ENCODE measurements at regions of chr7 and their contacts with region 1.

Region 1: GRCh38 chr7:133354546-133355324 is 101.9 kb downstream of the EXOC4 start:
- DNase-seq: no peak
- ATAC-seq: no peak
- H3K4me3 ChIP-seq: no peak overlapping the region
- H3K4me3 Mint-ChIP-seq: no peak overlapping the region
- H3K27ac ChIP-seq: no peak overlapping the region
- H3K27ac Mint-ChIP-seq: no peak overlapping the region
- H3K4me1 ChIP-seq: no peaks in the 10 kb centered on the region
- H3K4me1 Mint-ChIP-seq: no peaks in the 10 kb centered on the region
- H3K27me3 ChIP-seq: no peaks in the 10 kb centered on the region
- H3K27me3 Mint-ChIP-seq: no peaks in the 10 kb centered on the region
- CTCF ChIP-seq: no peak

Region 2: GRCh38 chr7:133364959-133365690 is 10.4 kb after region 1 on chr7:
- CTCF ChIA-PET with region 1: interaction called, 3 read pairs
- POLR2A ChIA-PET with region 1: no interaction called
- intact Hi-C with region 1: loop called (anchors 1 kb)
- DNase-seq: no peak
- ATAC-seq: no peak
- H3K4me3 ChIP-seq: no peak overlapping the region
- H3K4me3 Mint-ChIP-seq: no peak overlapping the region
- H3K27ac ChIP-seq: no peak overlapping the region
- H3K27ac Mint-ChIP-seq: no peak overlapping the region
- H3K4me1 ChIP-seq: no peaks in the 10 kb centered on the region
- H3K4me1 Mint-ChIP-seq: peaks cover 4% of the 10 kb centered on the region
- H3K27me3 ChIP-seq: no peaks in the 10 kb centered on the region
- H3K27me3 Mint-ChIP-seq: no peaks in the 10 kb centered on the region
- CTCF ChIP-seq: no peak